A673 (cell line): ENCODE measurements at regions of chr10 and their contacts with region 1.

Region 1: GRCh38 chr10:33193057-33193700 is 141.3 kb downstream of the NRP1 start:
- DNase-seq: peak; percentile 93
- H3K4me3 ChIP-seq: no peak overlapping the region
- H3K27ac ChIP-seq: no peak overlapping the region
- H3K4me1 ChIP-seq: peaks cover 67% of the 10 kb centered on the region
- H3K27me3 ChIP-seq: no peaks in the 10 kb centered on the region
- CTCF ChIP-seq: peak; percentile 93

Region 2: DNA sequence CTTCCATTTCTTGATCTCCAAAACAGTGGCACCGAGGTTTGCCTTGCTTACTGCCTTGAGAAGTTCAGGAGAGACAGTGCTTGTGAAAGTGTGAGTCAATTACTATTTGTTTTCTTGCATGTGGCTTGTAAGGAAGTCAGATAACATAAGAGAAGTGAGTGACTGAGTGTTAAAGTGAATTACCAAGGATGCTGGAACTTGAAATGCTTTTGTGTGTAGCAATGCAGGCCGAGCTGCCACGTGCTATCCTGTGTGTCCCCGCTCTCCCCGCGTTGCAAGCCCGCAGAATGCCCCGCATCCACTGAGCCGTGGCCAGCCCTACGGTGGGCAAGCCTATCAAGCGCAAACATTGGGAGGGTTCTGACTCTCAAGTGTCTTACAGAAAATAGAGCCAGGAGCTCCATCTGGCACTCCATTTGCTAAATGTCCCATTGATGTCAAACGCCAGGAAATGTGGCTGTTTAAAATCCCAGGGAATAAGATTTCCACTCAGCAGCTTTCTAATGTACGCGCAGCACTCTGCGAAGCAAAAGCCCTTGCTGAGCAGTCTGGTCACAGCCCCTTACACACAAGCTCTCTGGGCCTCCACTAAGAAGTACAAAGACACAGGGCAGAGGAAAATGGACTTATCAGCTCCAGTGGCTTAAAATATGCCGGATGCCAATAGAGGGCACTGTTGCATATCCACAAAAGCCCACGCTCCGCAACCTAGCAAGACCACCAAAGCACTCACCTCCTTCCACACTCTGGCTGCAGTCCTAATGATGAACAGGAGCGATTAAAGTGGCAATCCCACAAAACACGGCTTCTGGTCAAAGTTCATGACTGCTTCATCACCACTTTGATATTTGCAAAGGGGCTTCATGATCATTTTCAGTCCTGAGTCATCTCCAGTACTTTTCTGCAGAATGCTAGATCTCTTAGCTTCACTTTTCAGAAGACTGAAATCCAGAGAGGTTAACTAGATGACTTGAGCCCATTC is 77.2 kb before region 1 on chr10:
- CTCF ChIA-PET with region 1: interaction called, 6 read pairs
- POLR2A ChIA-PET with region 1: no interaction called
- intact Hi-C with region 1: loop called (anchors 2 kb)
- DNase-seq: peak; percentile 82
- H3K4me3 ChIP-seq: no peak overlapping the region
- H3K27ac ChIP-seq: no peak overlapping the region
- H3K4me1 ChIP-seq: peaks cover 14% of the 10 kb centered on the region
- H3K27me3 ChIP-seq: no peaks in the 10 kb centered on the region
- CTCF ChIP-seq: peak; percentile 87

Region 3: GRCh38 chr10:33939892-33940291 is 746.7 kb after region 1 on chr10:
- CTCF ChIA-PET with region 1: no interaction called
- POLR2A ChIA-PET with region 1: no interaction called
- intact Hi-C with region 1: loop called (anchors 10 kb)
- DNase-seq: no peak
- H3K4me3 ChIP-seq: no peak overlapping the region
- H3K27ac ChIP-seq: no peak overlapping the region
- H3K4me1 ChIP-seq: peaks cover 9% of the 10 kb centered on the region
- H3K27me3 ChIP-seq: no peaks in the 10 kb centered on the region
- CTCF ChIP-seq: no peak